ENCODE measurements at regions of chr1 and their contacts with region 1.

Region 1: GRCh38 chr1:234610348-234611152 is 572 bp upstream of the IRF2BP2 start:
- DNase-seq: peak; percentile 84
- ATAC-seq: peak; percentile 45
- H3K4me3 Mint-ChIP-seq: peak overlapping the region; percentile 90
- H3K27ac Mint-ChIP-seq: peak overlapping the region; percentile 95
- H3K4me1 Mint-ChIP-seq: peaks cover 56% of the 10 kb centered on the region
- H3K27me3 Mint-ChIP-seq: no peaks in the 10 kb centered on the region
- CTCF ChIP-seq: no peak

Region 2: DNA sequence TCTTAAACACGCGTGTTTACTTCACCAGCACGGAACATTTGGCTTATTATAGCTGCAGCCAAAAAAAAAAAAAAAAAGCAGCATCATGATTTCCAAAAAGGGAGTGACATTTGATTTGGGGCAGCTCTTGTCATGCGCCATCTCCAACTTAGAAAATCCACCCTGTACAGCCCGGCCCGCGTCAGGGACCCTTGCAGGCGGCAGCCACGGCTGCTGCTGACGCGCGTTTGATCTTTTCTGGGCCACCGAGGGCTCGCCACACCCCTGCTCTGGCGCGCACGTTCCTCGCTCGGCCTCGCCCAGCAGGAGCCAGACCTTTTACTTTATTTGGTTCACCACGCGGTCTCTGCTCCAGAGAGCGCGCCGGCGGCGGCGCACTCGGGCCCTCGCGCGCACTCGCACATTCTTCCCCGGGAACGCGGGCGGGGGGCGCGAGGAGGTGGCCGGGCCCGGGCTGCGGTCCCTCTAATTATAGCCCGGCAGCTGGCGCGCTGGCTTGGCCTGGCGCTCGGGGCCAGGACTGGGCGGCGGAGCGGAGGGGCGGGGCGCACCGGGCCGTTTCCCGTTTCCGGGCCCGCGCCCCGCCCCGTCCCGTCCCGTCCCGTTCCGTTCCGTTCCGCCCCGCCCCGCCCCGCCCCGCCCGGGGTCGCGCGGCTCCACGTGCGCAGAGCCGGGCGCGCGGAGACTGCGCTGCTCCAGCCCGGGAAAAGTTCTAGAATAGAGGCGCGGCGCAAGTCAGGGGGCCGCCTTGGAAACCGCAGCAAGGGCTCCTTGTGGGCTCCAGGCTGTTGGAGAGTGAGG is 10.7 kb before region 1 on chr1:
- CTCF ChIA-PET with region 1: interaction called, 7 read pairs
- POLR2A ChIA-PET with region 1: interaction called, 148 read pairs
- intact Hi-C with region 1: loop called (anchors 1 kb)
- DNase-seq: peak; percentile 67
- ATAC-seq: peak; percentile 73
- H3K4me3 Mint-ChIP-seq: peak overlapping the region; percentile 86
- H3K27ac Mint-ChIP-seq: peak overlapping the region; percentile 89
- H3K4me1 Mint-ChIP-seq: peaks cover 66% of the 10 kb centered on the region
- H3K27me3 Mint-ChIP-seq: no peaks in the 10 kb centered on the region
- CTCF ChIP-seq: no peak

Region 3: DNA sequence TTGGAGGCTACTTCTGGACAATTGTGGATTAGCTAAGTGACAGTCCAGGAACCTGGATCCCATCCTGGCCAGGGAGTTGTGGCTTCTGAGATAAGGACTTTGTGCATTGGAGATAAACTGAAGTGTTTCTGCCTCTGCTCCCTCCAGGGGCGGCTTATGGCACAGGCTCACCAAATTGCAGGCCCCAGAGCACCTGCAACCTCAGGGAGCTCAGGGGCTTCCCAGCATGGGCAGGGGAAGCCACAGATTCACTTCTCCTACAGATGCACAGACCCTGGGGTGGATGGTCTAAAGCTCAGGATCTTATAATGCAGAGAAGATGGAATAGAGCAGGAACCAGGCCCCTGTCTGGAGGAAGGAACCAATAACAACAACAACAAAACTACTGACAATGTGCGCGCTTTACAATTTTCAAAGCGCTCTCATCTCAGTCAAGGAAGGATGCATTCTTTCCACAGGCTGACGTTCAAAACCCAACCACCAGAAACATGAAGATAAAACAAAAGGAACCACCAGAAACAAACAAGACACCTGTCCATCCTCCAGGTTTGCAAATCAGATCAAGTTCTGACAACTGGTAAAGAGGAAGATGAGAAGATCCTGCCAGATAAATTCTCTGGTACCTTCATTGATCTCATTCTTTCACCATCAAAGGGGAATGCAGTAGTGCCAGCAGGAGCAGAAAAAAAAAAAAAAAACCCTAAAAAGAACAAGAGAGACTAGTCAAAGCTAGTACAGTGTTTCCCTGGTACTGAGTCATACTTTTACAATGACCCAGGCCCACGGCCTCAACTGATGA is 120.4 kb after region 1 on chr1:
- CTCF ChIA-PET with region 1: interaction called, 6 read pairs
- POLR2A ChIA-PET with region 1: interaction called, 78 read pairs
- intact Hi-C with region 1: loop called (anchors 1 kb)
- DNase-seq: peak; percentile 37
- ATAC-seq: peak; percentile 81
- H3K4me3 Mint-ChIP-seq: peak overlapping the region; percentile 44
- H3K27ac Mint-ChIP-seq: peak overlapping the region; percentile 79
- H3K4me1 Mint-ChIP-seq: peaks cover 46% of the 10 kb centered on the region
- H3K27me3 Mint-ChIP-seq: no peaks in the 10 kb centered on the region
- CTCF ChIP-seq: no peak

Region 4: GRCh38 chr1:234925440-234926263 is 315.1 kb after region 1 on chr1:
- CTCF ChIA-PET with region 1: no interaction called
- POLR2A ChIA-PET with region 1: interaction called, 17 read pairs
- intact Hi-C with region 1: loop called (anchors 2 kb)
- DNase-seq: no peak
- ATAC-seq: no peak
- H3K4me3 Mint-ChIP-seq: peak overlapping the region; percentile 78
- H3K27ac Mint-ChIP-seq: peak overlapping the region; percentile 78
- H3K4me1 Mint-ChIP-seq: peaks cover 30% of the 10 kb centered on the region
- H3K27me3 Mint-ChIP-seq: no peaks in the 10 kb centered on the region
- CTCF ChIP-seq: no peak

Region 5: GRCh38 chr1:234978397-234979295 is 368.1 kb after region 1 on chr1:
- CTCF ChIA-PET with region 1: interaction called, 8 read pairs
- POLR2A ChIA-PET with region 1: interaction called, 95 read pairs
- intact Hi-C with region 1: loop called (anchors 1 kb)
- DNase-seq: peak; percentile 68
- ATAC-seq: peak; percentile 58
- H3K4me3 Mint-ChIP-seq: peak overlapping the region; percentile 77
- H3K27ac Mint-ChIP-seq: peak overlapping the region; percentile 93
- H3K4me1 Mint-ChIP-seq: peaks cover 74% of the 10 kb centered on the region
- H3K27me3 Mint-ChIP-seq: no peaks in the 10 kb centered on the region
- CTCF ChIP-seq: no peak

Region 6: DNA sequence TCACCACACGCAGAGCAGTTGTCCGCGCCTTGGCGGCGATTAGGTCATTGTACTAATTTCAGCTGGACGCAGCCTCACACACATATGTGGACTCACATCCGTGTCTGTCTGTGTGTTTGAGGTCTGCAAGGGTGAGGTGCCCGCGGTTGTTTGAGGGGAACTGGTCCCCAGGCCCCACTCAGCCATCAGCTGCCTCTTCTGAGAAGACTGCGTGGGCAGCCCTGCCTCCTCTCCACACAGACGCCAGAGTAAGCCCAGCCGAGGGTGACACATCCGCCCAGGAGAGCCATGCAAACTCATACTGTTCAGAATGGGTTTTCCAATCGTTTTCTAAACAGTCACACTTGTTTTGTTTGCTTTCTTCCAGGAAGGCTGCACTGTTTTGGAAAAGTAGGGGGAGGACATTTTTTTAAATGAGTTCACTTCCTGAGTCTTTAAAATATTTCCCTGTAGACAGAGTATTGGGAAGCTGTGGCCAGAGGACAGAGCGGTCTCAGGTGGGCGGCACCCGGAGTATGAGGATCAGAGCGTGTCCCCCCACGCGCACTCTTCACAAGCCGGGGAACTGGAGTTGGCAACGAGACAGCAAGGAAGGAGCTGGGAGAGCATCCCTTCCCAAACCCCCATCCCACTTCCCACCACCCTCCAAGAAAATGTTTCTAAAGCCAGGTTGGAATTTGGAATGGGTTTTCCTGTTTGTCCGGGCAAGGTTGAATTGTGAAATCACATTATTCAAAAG is 464.8 kb after region 1 on chr1:
- CTCF ChIA-PET with region 1: interaction called, 3 read pairs
- POLR2A ChIA-PET with region 1: interaction called, 120 read pairs
- intact Hi-C with region 1: loop called (anchors 2 kb)
- DNase-seq: peak; percentile 54
- ATAC-seq: peak; percentile 76
- H3K4me3 Mint-ChIP-seq: peak overlapping the region; percentile 75
- H3K27ac Mint-ChIP-seq: peak overlapping the region; percentile 95
- H3K4me1 Mint-ChIP-seq: peaks cover 37% of the 10 kb centered on the region
- H3K27me3 Mint-ChIP-seq: no peaks in the 10 kb centered on the region
- CTCF ChIP-seq: no peak